ENCODE measurements at regions of chr7 and their contacts with region 1.

Region 1: DNA sequence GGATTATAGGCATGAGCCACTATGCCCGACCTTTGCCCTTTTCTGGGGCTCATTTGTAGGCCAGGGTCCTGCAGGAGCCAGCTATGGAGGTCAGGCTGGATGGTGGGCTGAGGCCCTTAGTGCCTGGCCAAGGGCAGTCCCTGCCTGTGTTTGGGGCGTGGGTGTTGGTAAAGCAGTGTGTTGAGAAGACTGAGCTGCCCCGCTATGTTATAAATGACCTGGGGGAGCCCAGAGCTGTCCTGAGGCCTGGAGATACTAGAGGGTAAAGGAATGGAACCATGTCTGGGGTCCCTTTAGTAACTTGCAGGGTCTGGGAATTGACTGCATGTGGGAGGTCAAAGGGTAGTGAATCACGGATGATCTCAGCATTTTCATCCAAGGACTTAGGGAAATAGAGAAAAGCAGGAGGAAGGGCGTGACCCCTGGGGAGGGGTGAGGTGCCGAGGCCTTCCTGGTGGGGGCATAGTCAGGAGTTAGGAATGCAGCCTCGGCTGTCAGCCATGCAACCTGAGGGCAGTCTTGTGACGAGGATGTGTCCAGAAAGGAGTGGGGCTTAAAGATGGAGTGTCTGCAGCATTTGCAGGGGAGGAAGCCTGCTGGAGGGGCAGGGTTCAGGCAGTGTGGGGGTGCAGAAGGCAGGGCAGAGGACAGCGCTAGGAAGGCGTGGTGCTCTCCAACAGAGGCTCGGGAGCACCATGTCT is 31.5 kb downstream of the TMEM248 start:
- ATAC-seq: peak in 4 of 8 experiments; percentile 17 to 89 (median 76)
- H3K4me3 ChIP-seq: no peak overlapping the region
- H3K27ac ChIP-seq: no peak overlapping the region
- H3K4me1 ChIP-seq: no peaks in the 10 kb centered on the region

Region 2: GRCh38 chr7:66859794-66860645 is 92.5 kb before region 1 on chr7:
- in situ Hi-C with region 1: loop called in 1 of 9 experiments (anchors 25 kb)
- ATAC-seq: peak in 5 of 8 experiments; percentile 61 to 94 (median 85)
- H3K4me3 ChIP-seq: no peak overlapping the region
- H3K27ac ChIP-seq: no peak overlapping the region
- H3K4me1 ChIP-seq: no peaks in the 10 kb centered on the region